Activated T-helper 1 cell treated with anti-CD3 and anti-CD28 coated beads, Interleukin-12 subunit alpha, Interleukin-12 subunit beta, Interleukin-2, Interleukin-4 antibody, amounts not matched to agents 30 ng/mL and 10 ng/mL and 1 ng/mL, durations not matched to agents 14 hours and 24 hours and 36 hours (primary cell): ENCODE measurements at regions of chr19 and their contacts with region 1.

Region 1: DNA sequence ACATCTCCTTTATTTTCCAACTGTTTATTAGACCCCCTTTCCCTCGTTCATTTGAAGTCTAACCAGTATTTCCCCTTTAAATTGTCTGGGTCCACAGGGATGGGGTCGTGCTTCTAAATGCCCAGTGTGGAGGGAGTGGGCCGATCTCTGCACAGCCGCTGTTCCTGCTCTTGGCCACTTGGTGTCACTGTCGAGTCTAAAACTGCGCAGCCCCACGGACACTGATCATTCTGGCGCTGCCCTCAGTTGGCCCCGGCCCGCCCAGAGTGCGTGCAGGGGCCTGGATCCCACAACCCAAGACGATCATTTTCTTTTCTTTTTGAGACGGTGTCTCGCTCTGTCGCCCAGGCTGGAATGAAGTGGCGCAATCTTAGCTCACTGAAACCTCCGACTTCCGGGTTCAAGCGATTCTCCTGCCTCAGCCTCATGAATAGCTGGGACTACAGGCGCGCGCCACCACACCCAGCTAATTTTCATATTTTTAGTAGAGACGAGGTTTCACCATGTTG is 12.0 kb downstream of the WDR88 start:
- DNase-seq: peak; percentile 43
- H3K4me3 Mint-ChIP-seq: no peak overlapping the region
- H3K27ac Mint-ChIP-seq: no peak overlapping the region
- H3K4me1 Mint-ChIP-seq: peaks cover 5% of the 10 kb centered on the region
- H3K27me3 Mint-ChIP-seq: peaks cover 16% of the 10 kb centered on the region

Region 2: DNA sequence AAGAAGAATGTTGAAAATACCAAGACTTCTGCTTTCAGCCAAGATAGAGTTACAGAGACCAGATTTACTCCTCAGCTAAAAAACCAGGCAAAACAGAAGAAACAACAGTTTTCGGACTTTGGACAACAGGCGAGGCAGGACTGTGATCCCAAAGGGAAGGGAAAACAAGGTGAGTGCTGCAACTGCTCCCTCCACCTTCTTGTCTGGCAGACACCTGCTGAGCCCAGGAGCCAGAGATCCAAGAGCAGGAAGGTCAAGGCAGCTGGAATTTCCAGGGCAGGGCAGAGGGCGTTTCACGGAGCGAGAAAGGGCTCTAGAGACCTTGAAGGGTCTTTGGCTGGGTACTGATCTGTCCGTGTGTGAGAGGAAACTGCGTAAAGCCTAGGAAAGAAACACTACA is 241.5 kb before region 1 on chr19:
- intact Hi-C with region 1: no loop called
- DNase-seq: no peak
- H3K4me3 Mint-ChIP-seq: no peak overlapping the region
- H3K27ac Mint-ChIP-seq: no peak overlapping the region
- H3K4me1 Mint-ChIP-seq: no peaks in the 10 kb centered on the region
- H3K27me3 Mint-ChIP-seq: no peaks in the 10 kb centered on the region

Region 3: DNA sequence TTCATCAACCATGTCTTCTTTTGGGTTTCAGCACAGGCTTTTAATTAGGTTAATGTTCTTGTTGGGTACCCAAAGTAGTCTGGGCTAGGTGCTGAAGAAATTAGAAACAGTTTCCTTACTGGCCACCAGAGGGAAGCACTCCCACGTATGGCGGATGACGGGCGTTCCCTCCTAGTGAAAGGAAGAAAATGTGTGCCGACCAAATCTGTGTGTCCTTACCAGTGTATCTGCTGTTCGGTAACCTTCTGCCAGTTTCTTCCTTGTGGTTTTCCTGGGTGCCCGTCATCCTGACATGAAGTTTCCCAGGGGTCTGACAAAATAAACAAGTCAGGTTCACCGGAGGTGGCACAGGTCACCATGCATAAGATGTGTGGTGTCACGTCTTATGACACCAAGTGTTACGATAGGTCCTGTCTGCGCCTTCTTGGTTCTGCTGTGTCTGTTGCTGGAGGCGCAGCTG is 18.0 kb before region 1 on chr19:
- intact Hi-C with region 1: loop called (anchors 2 kb)
- DNase-seq: peak; percentile 40
- H3K4me3 Mint-ChIP-seq: no peak overlapping the region
- H3K27ac Mint-ChIP-seq: no peak overlapping the region
- H3K4me1 Mint-ChIP-seq: peaks cover 9% of the 10 kb centered on the region
- H3K27me3 Mint-ChIP-seq: no peaks in the 10 kb centered on the region

Region 4: DNA sequence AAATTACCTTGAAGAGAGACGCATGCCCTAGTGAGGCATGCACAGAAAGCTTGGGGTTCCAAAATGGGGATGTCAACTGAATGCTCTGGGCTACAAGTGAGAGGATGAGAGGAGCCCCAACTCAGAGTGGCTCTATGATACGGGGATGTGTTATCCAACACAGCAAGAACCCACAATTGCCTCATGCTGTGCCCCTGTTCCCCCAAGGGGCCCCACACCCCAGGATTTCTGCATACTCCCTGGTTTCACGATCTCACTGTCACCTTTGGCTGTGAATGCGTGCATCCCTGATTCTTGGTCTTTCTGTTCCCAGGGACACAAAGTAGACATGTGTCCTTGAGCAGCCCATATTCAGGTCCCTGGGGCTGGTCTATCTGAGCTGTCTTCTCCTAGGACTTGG is 17.2 kb after region 1 on chr19:
- intact Hi-C with region 1: loop called (anchors 1 kb)
- DNase-seq: no peak
- H3K4me3 Mint-ChIP-seq: no peak overlapping the region
- H3K27ac Mint-ChIP-seq: peak overlapping the region; percentile 94
- H3K4me1 Mint-ChIP-seq: peaks cover 37% of the 10 kb centered on the region
- H3K27me3 Mint-ChIP-seq: no peaks in the 10 kb centered on the region

Region 5: DNA sequence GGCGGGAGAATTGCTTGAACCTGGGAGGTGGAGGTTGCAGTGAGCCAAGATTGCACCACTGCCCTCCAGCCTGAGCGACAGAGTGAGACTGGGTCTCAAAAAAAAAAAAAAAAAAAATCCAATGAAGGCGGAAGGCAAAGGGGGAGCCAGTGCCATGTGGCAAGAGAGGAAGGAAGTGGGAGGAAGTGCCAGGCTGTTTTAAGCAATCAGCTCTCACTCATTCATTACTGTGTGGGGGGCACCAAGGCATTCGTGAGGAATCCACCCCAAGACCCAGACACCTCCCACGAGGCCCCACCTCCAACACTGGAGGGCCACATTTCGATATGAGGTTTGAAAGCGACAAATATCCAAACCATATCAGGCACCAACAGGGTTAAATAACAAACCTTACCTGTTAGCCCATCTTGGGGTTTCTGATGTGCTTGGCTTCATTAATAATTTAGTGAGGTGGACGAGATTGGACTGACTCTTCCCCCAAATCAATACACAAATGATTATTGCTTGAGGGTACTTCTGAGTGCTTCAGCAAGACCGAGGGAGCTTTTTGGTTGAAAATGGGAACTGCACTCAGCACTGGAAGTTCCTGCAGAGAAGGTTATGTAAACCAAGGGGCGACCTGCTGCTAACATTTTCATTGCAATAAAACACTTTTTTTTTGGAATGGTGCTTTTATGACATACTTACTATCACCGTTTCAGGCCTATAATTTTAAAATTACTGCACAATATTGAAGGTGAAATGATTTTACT is 42.7 kb after region 1 on chr19:
- intact Hi-C with region 1: loop called (anchors 1 kb)
- DNase-seq: no peak
- H3K4me3 Mint-ChIP-seq: no peak overlapping the region
- H3K27ac Mint-ChIP-seq: no peak overlapping the region
- H3K4me1 Mint-ChIP-seq: no peaks in the 10 kb centered on the region
- H3K27me3 Mint-ChIP-seq: peaks cover 14% of the 10 kb centered on the region

Region 6: GRCh38 chr19:33235269-33235995 is 91.5 kb after region 1 on chr19:
- intact Hi-C with region 1: loop called (anchors 1 kb)
- DNase-seq: peak; percentile 58
- H3K4me3 Mint-ChIP-seq: no peak overlapping the region
- H3K27ac Mint-ChIP-seq: no peak overlapping the region
- H3K4me1 Mint-ChIP-seq: no peaks in the 10 kb centered on the region
- H3K27me3 Mint-ChIP-seq: peaks cover 2% of the 10 kb centered on the region

Region 7: DNA sequence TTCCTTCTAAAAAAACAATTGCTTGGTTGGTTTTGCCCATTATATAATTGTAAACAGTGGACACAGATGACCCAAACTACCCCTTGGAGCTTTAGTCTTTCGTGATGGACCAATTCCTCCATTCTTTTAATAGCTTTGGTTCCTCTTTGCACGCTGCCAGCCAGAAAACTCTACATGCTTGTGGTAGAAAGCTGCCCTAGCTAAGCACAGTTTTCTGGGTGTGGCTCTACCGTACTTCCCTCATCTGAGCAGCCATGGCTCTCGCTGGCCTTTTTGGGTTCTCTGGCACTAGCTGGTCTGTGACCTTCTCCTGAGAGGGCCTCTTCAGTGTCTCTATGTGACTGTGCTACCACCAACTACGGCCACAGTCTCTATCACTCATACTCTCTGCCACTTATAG is 188.3 kb after region 1 on chr19:
- intact Hi-C with region 1: no loop called
- DNase-seq: no peak
- H3K4me3 Mint-ChIP-seq: no peak overlapping the region
- H3K27ac Mint-ChIP-seq: no peak overlapping the region
- H3K4me1 Mint-ChIP-seq: no peaks in the 10 kb centered on the region
- H3K27me3 Mint-ChIP-seq: peaks cover 2% of the 10 kb centered on the region

Region 8: DNA sequence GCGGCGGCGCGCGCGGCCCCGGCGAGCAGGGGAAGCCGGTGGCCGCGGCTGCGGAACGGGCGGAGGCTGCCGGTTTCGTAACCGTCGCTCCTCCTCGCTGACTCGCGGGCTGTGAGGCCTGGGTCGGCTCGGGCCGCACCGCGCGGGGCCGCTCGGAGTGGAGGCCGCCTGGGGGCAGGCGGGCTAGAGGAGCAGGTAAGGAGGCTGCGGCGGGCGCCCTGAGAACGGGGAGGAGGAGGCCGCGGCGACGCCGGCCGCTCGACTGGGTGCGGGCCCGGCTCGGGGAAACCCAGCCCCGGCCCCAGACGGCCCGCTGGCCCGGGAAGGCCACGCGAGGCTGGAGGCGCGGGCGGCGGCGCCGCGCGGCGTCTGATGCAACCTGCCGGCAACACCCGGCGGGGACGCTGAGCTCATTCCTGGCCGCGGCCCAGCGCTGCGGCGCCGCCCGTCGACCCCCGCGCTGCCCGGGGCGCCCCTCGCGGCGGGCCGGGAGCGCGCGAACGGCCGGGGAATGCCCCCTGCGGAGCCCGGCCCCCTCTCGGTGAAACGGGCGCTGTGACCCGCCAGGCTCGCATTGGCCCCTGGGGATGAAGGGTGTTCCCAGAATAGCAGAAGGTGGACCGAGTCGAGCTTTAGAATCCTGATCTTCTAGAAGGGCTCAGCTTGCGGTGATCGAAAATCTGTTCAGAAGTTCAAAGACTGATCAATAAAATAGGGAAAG is 229.9 kb after region 1 on chr19 and contains the start of gene CEBPG:
- intact Hi-C with region 1: loop called (anchors 10 kb)
- DNase-seq: peak; percentile 60
- H3K4me3 Mint-ChIP-seq: peak within 1 kb of the TSS; percentile 93
- H3K27ac Mint-ChIP-seq: peak within 1 kb of the TSS; percentile 69
- H3K4me1 Mint-ChIP-seq: peaks cover 39% of the 10 kb centered on the region
- H3K27me3 Mint-ChIP-seq: no peaks in the 10 kb centered on the region
- total RNA-seq, gene CEBPG: 30.4 and 31.3 TPM in 2 replicates

Region 9: GRCh38 chr19:33406521-33407139 is 262.7 kb after region 1 on chr19:
- intact Hi-C with region 1: loop called (anchors 1 kb)
- DNase-seq: peak; percentile 54
- H3K4me3 Mint-ChIP-seq: no peak overlapping the region
- H3K27ac Mint-ChIP-seq: no peak overlapping the region
- H3K4me1 Mint-ChIP-seq: peaks cover 4% of the 10 kb centered on the region
- H3K27me3 Mint-ChIP-seq: no peaks in the 10 kb centered on the region

Region 10: GRCh38 chr19:34041925-34042521 is 898.1 kb after region 1 on chr19:
- intact Hi-C with region 1: no loop called
- DNase-seq: peak; percentile 43
- H3K4me3 Mint-ChIP-seq: no peak overlapping the region
- H3K27ac Mint-ChIP-seq: no peak overlapping the region
- H3K4me1 Mint-ChIP-seq: no peaks in the 10 kb centered on the region
- H3K27me3 Mint-ChIP-seq: no peaks in the 10 kb centered on the region